ENCODE measurements at regions of chr20 and their contacts with region 1.

Region 1: DNA sequence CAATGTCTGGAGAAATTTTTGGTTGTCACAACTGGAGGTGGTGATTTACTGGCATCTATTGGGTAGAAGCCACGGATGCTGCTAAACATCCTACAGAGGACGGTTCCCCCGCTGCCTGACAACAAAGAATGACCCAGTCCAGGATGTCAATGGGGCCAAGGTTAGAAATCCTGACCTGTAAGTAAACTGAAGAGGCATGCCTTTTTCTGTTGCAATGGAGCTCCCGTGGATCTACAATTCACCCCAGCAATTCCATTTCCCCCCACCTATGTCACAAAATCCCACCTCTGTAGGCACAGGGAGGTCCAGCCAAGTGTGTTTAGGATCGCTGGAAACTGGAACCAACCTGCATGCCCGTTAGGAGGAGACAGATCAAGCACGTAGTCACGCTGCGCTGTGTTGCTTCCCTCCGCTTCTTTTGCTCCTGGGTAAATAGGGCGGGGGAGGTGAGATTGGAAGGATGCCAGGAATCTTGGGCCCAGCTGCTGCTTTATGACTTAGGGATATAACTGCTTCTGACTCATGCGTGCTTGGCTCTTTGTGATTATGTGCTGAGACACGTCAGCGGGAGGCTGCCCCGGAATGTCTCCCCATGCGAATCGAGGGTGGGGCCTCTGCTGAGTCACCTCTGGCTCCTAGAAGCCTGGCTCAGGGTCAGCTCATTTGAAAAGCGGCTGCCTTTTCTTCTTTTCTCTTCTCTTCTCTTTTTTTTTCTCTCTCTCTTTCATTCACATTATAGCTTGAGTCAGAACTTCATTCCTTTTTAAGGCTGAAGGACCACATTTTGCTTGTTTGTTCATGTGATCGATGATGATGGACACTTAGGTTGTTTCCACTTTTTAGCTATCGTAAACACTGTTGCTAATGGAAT is 12.4 kb upstream of the PEDS1 start:
- DNase-seq: peak; percentile 100
- H3K4me3 ChIP-seq: peak overlapping the region in 2 of 3 experiments; percentile 14 to 37
- H3K27ac ChIP-seq: peak overlapping the region; percentile 89
- H3K4me1 ChIP-seq: peaks cover 12% of the 10 kb centered on the region
- H3K27me3 ChIP-seq: no peaks in the 10 kb centered on the region
- CTCF ChIP-seq: no peak
- POLR2A ChIP-seq: peak; percentile 78

Region 2: GRCh38 chr20:50029697-50030461 is 136.0 kb before region 1 on chr20:
- CTCF ChIA-PET with region 1: no interaction called
- POLR2A ChIA-PET with region 1: no interaction called
- dilution Hi-C with region 1: no loop called
- intact Hi-C with region 1: loop called (anchors 1 kb)
- DNase-seq: peak; percentile 93
- H3K4me3 ChIP-seq: peak overlapping the region in 1 of 3 experiments; percentile 2
- H3K27ac ChIP-seq: peak overlapping the region; percentile 99
- H3K4me1 ChIP-seq: peaks cover 57% of the 10 kb centered on the region
- H3K27me3 ChIP-seq: no peaks in the 10 kb centered on the region
- CTCF ChIP-seq: no peak
- POLR2A ChIP-seq: peak; percentile 66

Region 3: DNA sequence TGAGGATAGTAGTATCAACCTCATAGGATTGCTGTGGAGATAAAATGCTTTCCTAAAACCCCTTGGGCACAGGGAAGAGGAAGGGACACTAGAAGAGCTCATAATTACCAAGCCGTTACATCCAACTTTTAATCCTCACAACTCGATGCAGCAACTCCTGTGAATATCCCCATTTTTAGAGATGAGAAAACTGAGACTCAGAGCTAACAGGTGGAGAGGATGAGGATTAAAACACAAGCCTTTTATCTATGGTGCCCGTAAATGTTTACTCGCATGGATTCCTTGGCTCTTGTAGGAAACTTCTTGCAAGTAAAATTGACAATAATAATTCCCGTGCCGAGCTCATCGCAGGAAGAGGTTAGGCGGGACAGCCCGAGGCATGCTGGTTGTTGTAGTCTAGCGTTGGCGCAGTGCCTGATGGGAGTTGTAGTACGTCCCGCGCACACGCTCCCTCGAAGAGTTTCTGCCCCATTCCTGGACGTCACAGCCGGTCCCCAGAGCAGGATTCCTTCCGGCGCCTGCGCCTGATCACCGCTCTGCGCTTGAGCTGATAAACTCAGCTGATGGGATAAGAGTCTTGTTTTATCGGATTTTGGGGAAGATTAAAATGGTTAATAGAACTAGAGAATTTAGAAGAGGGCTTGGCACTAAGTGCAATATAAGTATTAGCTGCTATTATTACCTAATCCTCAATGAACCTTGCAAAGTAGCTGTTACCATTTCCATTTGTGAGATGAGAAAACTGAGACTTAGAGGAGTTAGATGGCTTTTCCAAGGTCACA is 50.1 kb before region 1 on chr20:
- CTCF ChIA-PET with region 1: interaction called, 309 read pairs
- POLR2A ChIA-PET with region 1: interaction called, 6 read pairs
- dilution Hi-C with region 1: no loop called
- intact Hi-C with region 1: no loop called
- DNase-seq: peak; percentile 98
- H3K4me3 ChIP-seq: peak overlapping the region; percentile 51 to 80 (median 63)
- H3K27ac ChIP-seq: peak overlapping the region; percentile 30
- H3K4me1 ChIP-seq: peaks cover 34% of the 10 kb centered on the region
- H3K27me3 ChIP-seq: no peaks in the 10 kb centered on the region
- CTCF ChIP-seq: no peak
- POLR2A ChIP-seq: peak; percentile 79

Region 4: DNA sequence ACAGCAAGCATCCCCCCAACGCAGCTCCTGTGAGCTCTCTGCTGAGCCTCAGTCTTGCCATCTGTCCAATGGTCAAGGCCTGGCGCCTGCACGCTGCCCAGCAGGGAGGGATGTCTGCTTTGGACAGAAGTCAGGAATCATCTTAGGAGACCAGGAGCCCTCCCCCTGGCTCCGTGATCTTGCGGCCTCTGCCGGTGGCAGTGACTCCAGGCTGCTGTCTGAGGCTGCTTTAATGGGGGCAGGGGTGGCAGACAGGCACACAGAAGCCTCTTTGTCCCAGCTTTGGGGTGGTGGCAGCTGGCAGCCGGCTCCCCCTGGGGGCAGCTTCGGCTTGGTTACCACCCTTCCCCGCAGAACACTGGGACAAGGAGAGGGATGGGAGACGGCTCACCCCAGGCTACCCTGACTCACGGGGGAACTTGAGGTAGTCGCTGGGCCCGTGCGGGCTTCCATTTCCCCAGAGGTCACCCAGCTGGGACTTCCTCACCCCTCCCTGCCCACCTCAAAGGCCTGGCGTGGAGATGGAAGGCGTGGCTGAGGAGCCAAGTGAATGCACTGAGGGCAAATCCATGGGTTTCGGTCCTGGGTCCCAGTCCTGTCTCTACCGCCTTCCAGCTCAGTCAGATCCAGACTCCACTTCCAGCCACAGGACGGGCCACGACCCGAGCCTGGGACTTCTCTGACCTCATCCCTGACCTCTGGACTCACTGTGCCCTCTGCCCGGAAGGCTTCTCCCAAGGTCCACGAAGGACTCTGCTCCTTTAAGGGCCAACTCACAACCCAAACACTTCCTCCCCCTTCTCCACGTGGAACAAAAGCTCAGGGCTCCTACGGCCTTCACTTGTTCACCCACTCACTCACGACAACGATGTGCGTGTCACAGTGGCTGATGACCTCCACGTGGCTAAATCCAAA is 27.2 kb before region 1 on chr20:
- CTCF ChIA-PET with region 1: interaction called, 9 read pairs
- POLR2A ChIA-PET with region 1: interaction called, 4 read pairs
- dilution Hi-C with region 1: no loop called
- intact Hi-C with region 1: loop called (anchors 1 kb)
- DNase-seq: no peak
- H3K4me3 ChIP-seq: no peak overlapping the region
- H3K27ac ChIP-seq: peak overlapping the region; percentile 3
- H3K4me1 ChIP-seq: peaks cover 39% of the 10 kb centered on the region
- H3K27me3 ChIP-seq: no peaks in the 10 kb centered on the region
- CTCF ChIP-seq: peak in 1 of 2 donors; percentile 21
- POLR2A ChIP-seq: no peak

Region 5: GRCh38 chr20:50153485-50154377 is 12.2 kb before region 1 on chr20 and contains the start of gene PEDS1:
- CTCF ChIA-PET with region 1: interaction called, 39 read pairs
- POLR2A ChIA-PET with region 1: interaction called, 11 read pairs
- dilution Hi-C with region 1: no loop called
- intact Hi-C with region 1: loop called (anchors 1 kb)
- DNase-seq: peak; percentile 88
- H3K4me3 ChIP-seq: peak within 1 kb of the TSS; percentile 53 to 86 (median 80)
- H3K27ac ChIP-seq: peak within 1 kb of the TSS; percentile 77
- H3K4me1 ChIP-seq: peaks cover 39% of the 10 kb centered on the region
- H3K27me3 ChIP-seq: no peaks in the 10 kb centered on the region
- CTCF ChIP-seq: no peak
- POLR2A ChIP-seq: peak; percentile 90
- total RNA-seq, gene PEDS1: 62.7 and 71.9 TPM in 2 replicates

Measured in endothelial cell of umbilical vein (primary cell).